ENCODE measurements at regions of chr9 and their contacts with region 1.

Region 1: DNA sequence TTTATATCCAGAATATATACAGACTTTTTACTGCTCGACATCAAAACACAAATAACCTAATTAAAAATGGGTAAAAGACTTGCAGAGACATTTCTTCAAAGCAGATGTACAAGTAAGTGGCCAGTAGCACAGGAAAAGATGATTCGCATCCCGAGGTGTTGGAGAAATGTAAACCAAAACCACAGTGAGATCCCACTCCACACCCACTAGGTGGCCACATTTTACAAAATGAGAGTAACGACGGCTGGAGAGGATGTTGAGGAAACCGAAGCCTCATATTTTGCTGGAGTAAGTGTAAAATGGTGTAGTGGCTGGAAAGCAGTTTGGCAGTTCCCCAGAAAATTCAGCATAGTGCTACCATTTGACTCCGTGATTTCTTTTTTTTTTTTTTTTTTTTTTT is 21.2 kb upstream of the GBGT1 start:
- DNase-seq: no peak
- ATAC-seq: peak; percentile 53
- H3K4me3 ChIP-seq: no peak overlapping the region
- H3K27ac ChIP-seq: no peak overlapping the region
- H3K4me1 ChIP-seq: no peaks in the 10 kb centered on the region
- H3K27me3 ChIP-seq: peaks cover 3 to 5% of the 10 kb centered on the region in 2 experiments
- CTCF ChIP-seq: peak; percentile 40 to 47 (median 44); a peak in 4 of 6 replicates
- EP300 ChIP-seq: no peak
- POLR2A ChIP-seq: no peak
- RAD21 ChIP-seq: peak; percentile 40

Region 2: GRCh38 chr9:133103183-133103986 is 81.6 kb before region 1 on chr9:
- CTCF ChIA-PET with region 1: interaction called, 3 read pairs
- POLR2A ChIA-PET with region 1: no interaction called
- RAD21 ChIA-PET with region 1: no interaction called
- SMC1A ChIA-PET with region 1: no interaction called
- in situ Hi-C with region 1: no loop called
- intact Hi-C with region 1: loop called (anchors 1 kb)
- DNase-seq: no peak
- ATAC-seq: peak; percentile 88
- H3K4me3 ChIP-seq: no peak overlapping the region
- H3K27ac ChIP-seq: no peak overlapping the region
- H3K4me1 ChIP-seq: no peaks in the 10 kb centered on the region
- H3K27me3 ChIP-seq: no peaks in the 10 kb centered on the region
- CTCF ChIP-seq: peak; percentile 94 to 96 (median 95)
- EP300 ChIP-seq: no peak
- POLR2A ChIP-seq: no peak; the same call in 1 of the 2 replicates
- RAD21 ChIP-seq: peak; percentile 95

Region 3: DNA sequence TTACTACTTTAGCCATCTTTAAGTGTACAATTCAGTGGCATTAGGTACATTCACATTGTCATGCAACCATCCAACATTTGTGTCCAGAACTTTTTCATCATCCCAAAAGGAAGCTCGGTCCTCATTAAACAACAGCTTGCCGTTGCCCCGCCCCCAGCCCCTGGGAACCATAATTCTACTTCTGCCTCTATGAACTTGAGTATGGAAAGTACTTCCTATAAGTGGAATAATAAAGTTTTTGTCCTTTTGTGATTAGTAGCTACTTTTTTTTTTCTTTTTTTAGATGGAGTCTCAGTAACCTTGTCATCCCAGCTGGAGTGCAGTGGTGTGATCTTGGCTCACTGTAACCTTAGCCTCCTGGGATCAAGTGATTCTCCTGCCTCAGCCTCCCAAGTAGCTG is 26.3 kb before region 1 on chr9:
- CTCF ChIA-PET with region 1: interaction called, 10 read pairs
- POLR2A ChIA-PET with region 1: no interaction called
- RAD21 ChIA-PET with region 1: no interaction called
- SMC1A ChIA-PET with region 1: interaction called, 3 read pairs
- in situ Hi-C with region 1: no loop called
- intact Hi-C with region 1: no loop called
- DNase-seq: no peak
- ATAC-seq: no peak
- H3K4me3 ChIP-seq: no peak overlapping the region
- H3K27ac ChIP-seq: no peak overlapping the region
- H3K4me1 ChIP-seq: no peaks in the 10 kb centered on the region
- H3K27me3 ChIP-seq: no peaks in the 10 kb centered on the region
- CTCF ChIP-seq: no peak
- EP300 ChIP-seq: no peak
- POLR2A ChIP-seq: no peak
- RAD21 ChIP-seq: no peak

Region 4: GRCh38 chr9:133168432-133168831 is 16.5 kb before region 1 on chr9:
- CTCF ChIA-PET with region 1: interaction called, 51 read pairs
- POLR2A ChIA-PET with region 1: no interaction called
- RAD21 ChIA-PET with region 1: interaction called, 5 read pairs
- SMC1A ChIA-PET with region 1: no interaction called
- in situ Hi-C with region 1: no loop called
- intact Hi-C with region 1: no loop called
- DNase-seq: no peak
- ATAC-seq: no peak
- H3K4me3 ChIP-seq: no peak overlapping the region
- H3K27ac ChIP-seq: no peak overlapping the region
- H3K4me1 ChIP-seq: peaks cover 3% of the 10 kb centered on the region
- H3K27me3 ChIP-seq: peaks cover 4 to 11% of the 10 kb centered on the region in 2 experiments
- CTCF ChIP-seq: no peak
- EP300 ChIP-seq: no peak
- POLR2A ChIP-seq: no peak
- RAD21 ChIP-seq: no peak

Region 5: DNA sequence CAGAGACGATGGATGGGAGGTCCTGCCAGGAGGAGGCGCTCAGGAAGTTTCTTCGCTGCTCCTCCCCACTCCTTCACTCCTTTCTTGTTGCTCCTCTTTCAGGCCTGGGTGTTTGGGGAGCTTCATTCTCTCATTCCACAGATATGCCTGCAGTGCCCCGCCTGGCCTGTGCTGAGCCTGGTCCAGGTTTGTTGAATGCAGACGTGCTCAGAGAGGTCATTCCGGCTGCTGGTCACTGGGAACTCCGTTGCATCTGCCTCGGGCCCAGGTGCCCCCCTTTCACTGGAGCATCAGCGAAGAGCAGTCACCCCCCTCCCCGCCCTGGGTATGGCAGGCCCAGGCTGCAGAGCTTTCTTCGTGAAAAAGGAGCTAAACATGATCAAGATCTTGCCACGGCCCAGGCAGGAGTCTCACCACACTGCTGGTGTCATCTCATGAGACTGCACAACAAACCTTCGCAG is 135.5 kb after region 1 on chr9:
- CTCF ChIA-PET with region 1: no interaction called
- POLR2A ChIA-PET with region 1: no interaction called
- RAD21 ChIA-PET with region 1: no interaction called
- SMC1A ChIA-PET with region 1: no interaction called
- in situ Hi-C with region 1: no loop called
- intact Hi-C with region 1: loop called (anchors 10 kb)
- DNase-seq: no peak
- ATAC-seq: no peak
- H3K4me3 ChIP-seq: no peak overlapping the region
- H3K27ac ChIP-seq: no peak overlapping the region
- H3K4me1 ChIP-seq: no peaks in the 10 kb centered on the region
- H3K27me3 ChIP-seq: no peaks in the 10 kb centered on the region
- CTCF ChIP-seq: 0 out of 6 replicates have a peak, but pooled peaks of 1 of the 3 experiments have one; percentile 2
- EP300 ChIP-seq: no peak
- POLR2A ChIP-seq: no peak
- RAD21 ChIP-seq: no peak

Region 6: GRCh38 chr9:133335878-133336811 is 151.2 kb after region 1 on chr9 and contains the start of gene SURF6:
- CTCF ChIA-PET with region 1: interaction called, 29 read pairs
- POLR2A ChIA-PET with region 1: no interaction called
- RAD21 ChIA-PET with region 1: interaction called, 3 read pairs
- SMC1A ChIA-PET with region 1: interaction called, 21 read pairs
- in situ Hi-C with region 1: no loop called
- intact Hi-C with region 1: no loop called
- DNase-seq: peak; percentile 69
- ATAC-seq: peak; percentile 98
- H3K4me3 ChIP-seq: peak within 1 kb of the TSS; percentile 98
- H3K27ac ChIP-seq: peak within 1 kb of the TSS; percentile 82
- H3K4me1 ChIP-seq: peaks cover 9% of the 10 kb centered on the region
- H3K27me3 ChIP-seq: no peaks in the 10 kb centered on the region
- CTCF ChIP-seq: no peak
- EP300 ChIP-seq: no peak
- POLR2A ChIP-seq: peak; percentile 90
- RAD21 ChIP-seq: no peak
- polyA plus RNA-seq, gene SURF6: 2.2 to 3.0 TPM

Region 7: GRCh38 chr9:133485361-133486260 is 300.6 kb after region 1 on chr9:
- CTCF ChIA-PET with region 1: interaction called, 61 read pairs
- POLR2A ChIA-PET with region 1: no interaction called
- RAD21 ChIA-PET with region 1: interaction called, 12 read pairs
- SMC1A ChIA-PET with region 1: interaction called, 14 read pairs
- in situ Hi-C with region 1: loop called (anchors 5 kb)
- intact Hi-C with region 1: loop called (anchors 1 kb)
- DNase-seq: no peak
- ATAC-seq: peak; percentile 76
- H3K4me3 ChIP-seq: no peak overlapping the region
- H3K27ac ChIP-seq: no peak overlapping the region
- H3K4me1 ChIP-seq: peaks cover 3% of the 10 kb centered on the region
- H3K27me3 ChIP-seq: no peaks in the 10 kb centered on the region; a peak in 3 of 4 replicates
- CTCF ChIP-seq: no peak
- EP300 ChIP-seq: no peak
- POLR2A ChIP-seq: no peak
- RAD21 ChIP-seq: no peak

Region 8: GRCh38 chr9:133813749-133814585 is 629.0 kb after region 1 on chr9:
- CTCF ChIA-PET with region 1: no interaction called
- POLR2A ChIA-PET with region 1: no interaction called
- RAD21 ChIA-PET with region 1: no interaction called
- SMC1A ChIA-PET with region 1: no interaction called
- in situ Hi-C with region 1: no loop called
- intact Hi-C with region 1: no loop called
- DNase-seq: no peak
- ATAC-seq: no peak
- H3K4me3 ChIP-seq: no peak overlapping the region
- H3K27ac ChIP-seq: no peak overlapping the region
- H3K4me1 ChIP-seq: peaks cover 4% of the 10 kb centered on the region; the same call in 1 of the 2 replicates
- H3K27me3 ChIP-seq: no peaks in the 10 kb centered on the region
- CTCF ChIP-seq: no peak
- EP300 ChIP-seq: no peak
- POLR2A ChIP-seq: no peak
- RAD21 ChIP-seq: no peak

Region 9: DNA sequence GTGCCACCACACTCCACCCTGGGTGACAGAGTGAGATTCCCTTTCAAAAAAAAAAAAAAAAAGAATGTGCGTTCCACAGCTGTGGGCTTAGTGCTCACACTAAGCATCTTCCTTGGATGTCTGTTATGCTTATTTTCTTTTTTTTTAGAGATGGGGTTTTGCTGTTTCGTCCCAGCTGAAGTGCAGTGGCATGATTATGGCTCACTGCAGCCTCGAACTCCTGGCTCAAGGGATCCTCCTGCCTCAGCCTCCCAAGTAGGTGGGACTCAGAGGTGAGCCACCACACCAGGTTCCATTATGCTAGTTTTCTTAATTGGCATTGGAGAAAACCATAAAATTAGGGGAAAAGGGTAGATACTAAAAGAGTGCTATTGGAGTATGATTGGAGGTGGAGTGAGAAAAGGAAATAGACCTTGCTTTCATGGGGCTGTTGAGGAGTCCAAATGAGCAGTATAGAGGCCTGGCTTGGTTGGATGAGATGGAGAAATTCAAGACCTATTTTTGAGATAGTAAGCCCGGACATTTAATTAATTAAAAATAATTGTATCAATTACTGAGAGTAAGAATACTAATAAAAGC is 839.3 kb after region 1 on chr9:
- CTCF ChIA-PET with region 1: no interaction called
- POLR2A ChIA-PET with region 1: no interaction called
- RAD21 ChIA-PET with region 1: no interaction called
- SMC1A ChIA-PET with region 1: no interaction called
- in situ Hi-C with region 1: no loop called
- intact Hi-C with region 1: no loop called
- DNase-seq: no peak
- ATAC-seq: no peak
- H3K4me3 ChIP-seq: no peak overlapping the region
- H3K27ac ChIP-seq: no peak overlapping the region
- H3K4me1 ChIP-seq: peaks cover 5% of the 10 kb centered on the region
- H3K27me3 ChIP-seq: no peaks in the 10 kb centered on the region
- CTCF ChIP-seq: no peak
- EP300 ChIP-seq: no peak
- POLR2A ChIP-seq: no peak
- RAD21 ChIP-seq: no peak